ENCODE measurements at regions of chr1 and their contacts with region 1.

Region 1: DNA sequence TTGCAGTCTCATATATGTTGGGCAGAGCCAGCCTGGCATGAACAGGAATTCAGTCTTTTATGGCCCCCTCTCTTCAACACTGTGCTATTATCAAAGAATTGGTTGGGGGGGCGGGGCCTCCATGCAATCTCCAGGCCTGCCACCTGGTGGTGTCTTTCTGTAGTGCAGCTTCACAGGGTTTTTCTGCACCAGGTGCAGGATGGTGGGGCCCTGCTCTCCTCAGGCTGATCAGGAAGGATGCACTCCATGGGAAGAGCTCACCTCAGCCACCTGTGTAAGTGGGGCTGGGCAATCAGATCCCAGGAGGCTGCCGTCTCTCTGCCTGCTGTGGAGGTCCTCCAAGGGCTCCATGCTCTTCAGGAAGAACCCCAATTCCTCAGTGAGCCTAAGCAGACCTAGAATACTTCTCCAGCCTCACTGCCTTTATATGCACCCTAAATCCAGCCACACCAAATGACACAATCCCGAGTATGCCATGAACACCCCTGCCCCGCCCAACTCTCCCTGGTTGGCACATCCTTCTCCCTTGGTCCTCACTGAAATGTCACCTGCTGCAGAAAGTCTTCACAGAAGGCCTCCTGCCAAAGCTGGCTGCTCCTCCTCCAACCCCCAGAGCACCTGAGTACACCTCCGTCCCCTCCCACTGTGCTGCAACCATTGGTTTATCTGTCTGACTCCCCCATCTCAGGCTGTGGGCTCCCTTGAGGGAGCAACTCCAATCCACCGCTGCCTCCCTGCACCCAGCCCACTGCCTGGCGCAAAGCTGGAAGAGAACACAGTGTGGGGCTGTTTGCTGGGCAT is 16.5 kb downstream of the STK40 start:
- DNase-seq: peak; percentile 46 to 98
- H3K4me3 ChIP-seq: no peak overlapping the region
- H3K27ac ChIP-seq: no peak overlapping the region
- H3K4me1 ChIP-seq: peaks cover 12 to 33% (median 20%) of the 10 kb centered on the region in 4 experiments
- H3K27me3 ChIP-seq: no peaks in the 10 kb centered on the region
- CTCF ChIP-seq: peak; percentile 85 to 94 (median 87)
- EP300 ChIP-seq: no peak
- POLR2A ChIP-seq: no peak
- RAD21 ChIP-seq: peak; percentile 55 to 63

Region 2: DNA sequence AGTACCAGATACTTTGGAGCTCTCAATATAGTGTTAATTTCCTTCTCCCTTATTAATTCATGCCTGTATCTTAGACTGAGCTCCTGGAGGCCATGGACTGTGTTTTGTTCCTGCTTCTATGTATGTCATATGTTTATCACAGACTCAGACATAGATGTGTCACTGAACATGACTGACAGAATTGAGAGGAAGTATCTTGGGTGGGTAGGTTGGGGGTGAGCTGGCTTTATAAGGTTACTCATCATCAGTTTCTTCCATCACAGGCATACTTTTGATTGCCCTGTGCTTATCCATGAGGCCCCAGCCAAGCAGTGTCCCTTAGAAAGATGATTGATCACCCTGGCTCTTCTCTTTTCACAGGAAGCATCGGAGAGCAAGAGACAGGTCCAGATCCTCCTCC is 68.7 kb before region 1 on chr1:
- CTCF ChIA-PET with region 1: interaction called, 30 read pairs
- POLR2A ChIA-PET with region 1: no interaction called
- DNase-seq: no peak
- H3K4me3 ChIP-seq: no peak overlapping the region
- H3K27ac ChIP-seq: no peak overlapping the region
- H3K4me1 ChIP-seq: no peaks in the 10 kb centered on the region; a peak in 1 of 7 replicates
- H3K27me3 ChIP-seq: no peaks in the 10 kb centered on the region
- CTCF ChIP-seq: no peak
- EP300 ChIP-seq: no peak
- POLR2A ChIP-seq: no peak
- RAD21 ChIP-seq: no peak

Region 3: DNA sequence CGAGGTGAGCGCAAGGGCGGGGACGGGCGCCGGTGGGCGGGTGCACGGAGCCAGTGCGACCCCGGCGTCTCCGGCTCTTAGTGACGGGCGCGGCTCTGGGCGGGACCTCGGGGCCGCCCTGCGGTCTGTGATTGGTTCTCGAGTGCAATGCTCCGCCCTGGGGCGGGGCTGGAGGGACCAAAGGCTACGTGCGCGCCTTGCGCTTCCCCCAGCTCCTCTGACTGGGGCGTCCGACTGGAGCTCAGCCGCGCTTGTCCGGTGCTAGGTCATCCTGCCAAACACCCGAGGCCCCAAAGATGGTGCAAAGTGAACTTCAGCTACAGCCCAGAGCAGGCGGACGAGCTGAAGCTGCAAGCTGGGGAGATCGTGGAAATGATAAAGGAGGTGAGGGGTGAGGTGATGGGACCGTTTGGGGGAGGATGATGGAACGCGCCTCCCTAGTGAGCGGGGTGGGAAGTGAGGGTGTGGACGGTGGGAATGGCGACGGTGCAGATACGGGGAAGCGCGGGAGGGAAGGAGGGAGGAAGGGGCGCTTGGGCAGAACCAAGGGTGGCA is 62.3 kb before region 1 on chr1:
- CTCF ChIA-PET with region 1: interaction called, 30 read pairs
- POLR2A ChIA-PET with region 1: interaction called, 4 read pairs
- DNase-seq: peak; percentile 88 to 97
- H3K4me3 ChIP-seq: peak overlapping the region; percentile 62 to 87 (median 72)
- H3K27ac ChIP-seq: no peak overlapping the region
- H3K4me1 ChIP-seq: peaks cover 0 to 9% (median 6%) of the 10 kb centered on the region in 4 experiments; a peak in 6 of 7 replicates
- H3K27me3 ChIP-seq: no peaks in the 10 kb centered on the region
- CTCF ChIP-seq: no peak
- EP300 ChIP-seq: no peak
- POLR2A ChIP-seq: peak; percentile 88 to 93
- RAD21 ChIP-seq: no peak

Region 4: DNA sequence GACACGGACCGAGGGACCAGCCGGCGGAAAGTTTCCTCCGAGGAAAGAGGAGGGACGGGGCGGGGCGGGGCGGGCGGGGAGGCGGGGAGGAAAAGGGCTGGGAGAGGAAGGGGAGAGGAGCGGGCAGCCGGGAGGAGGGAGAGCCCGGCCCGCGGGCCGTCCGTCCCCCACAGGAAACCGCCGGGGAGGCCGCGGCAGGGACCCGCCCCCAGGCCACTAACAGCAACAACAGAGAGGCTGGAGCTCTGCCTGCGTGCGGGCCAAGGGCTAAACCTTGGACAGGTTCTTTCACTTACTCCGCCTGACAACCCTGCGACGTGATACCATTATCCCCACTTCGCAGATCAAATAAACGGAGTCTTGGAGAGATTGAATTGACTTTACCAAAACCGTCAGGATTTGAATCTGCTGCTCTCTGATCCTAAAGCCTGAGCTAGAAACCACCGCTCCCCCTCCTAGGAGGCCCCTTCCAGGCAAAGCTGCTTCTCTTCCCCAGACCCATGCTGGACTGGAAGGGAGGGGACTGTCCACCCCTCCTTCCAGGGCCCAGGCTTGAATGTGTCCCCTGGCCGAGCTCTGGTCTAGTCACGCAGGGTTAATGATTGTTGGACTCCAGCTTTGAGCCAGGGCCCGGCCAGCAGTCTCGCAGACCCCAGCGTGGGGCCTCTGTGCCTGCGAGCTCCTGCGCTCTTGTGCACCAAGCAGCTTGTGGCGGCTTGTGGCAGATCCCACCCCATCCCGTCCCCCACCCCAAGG is 45.5 kb before region 1 on chr1 and contains the start of gene EVA1B:
- CTCF ChIA-PET with region 1: interaction called, 15 read pairs
- POLR2A ChIA-PET with region 1: interaction called, 5 read pairs
- DNase-seq: peak in 1 of 2 experiments; percentile 79
- H3K4me3 ChIP-seq: peak within 1 kb of the TSS; percentile 27 to 67 (median 49)
- H3K27ac ChIP-seq: no peak within 1 kb of the TSS
- H3K4me1 ChIP-seq: peaks cover 0 to 28% (median 16%) of the 10 kb centered on the region in 4 experiments; a peak in 6 of 7 replicates
- H3K27me3 ChIP-seq: peaks cover 0 to 39% (median 20%) of the 10 kb centered on the region in 4 experiments; a peak in 5 of 7 replicates
- CTCF ChIP-seq: no peak
- EP300 ChIP-seq: no peak
- POLR2A ChIP-seq: no peak; a peak in 1 of 3 replicates
- RAD21 ChIP-seq: no peak
- total RNA-seq, gene EVA1B: 10.0 and 10.3 TPM in 2 replicates

Region 5: DNA sequence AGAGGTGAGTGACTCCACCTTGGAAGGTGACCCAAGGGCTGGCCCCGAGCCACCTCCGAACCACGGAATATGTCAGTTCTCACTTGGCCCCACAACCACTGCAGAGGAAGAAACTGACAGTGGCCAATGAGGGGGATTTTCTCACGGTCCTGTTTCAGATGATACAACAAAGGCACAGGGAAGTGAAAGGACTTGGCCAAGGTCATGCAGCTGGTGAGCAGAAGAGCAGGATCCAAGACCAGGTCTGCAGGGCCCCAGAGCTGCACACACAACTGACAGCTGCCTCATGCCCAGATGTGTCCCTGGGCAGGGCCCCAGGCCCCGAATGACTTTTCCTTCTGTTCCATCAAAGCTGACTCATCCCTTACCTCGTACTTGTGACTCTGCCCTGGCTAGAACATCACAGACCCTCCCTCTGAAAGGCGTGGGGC is 20.0 kb before region 1 on chr1:
- CTCF ChIA-PET with region 1: no interaction called
- POLR2A ChIA-PET with region 1: no interaction called
- DNase-seq: no peak
- H3K4me3 ChIP-seq: no peak overlapping the region
- H3K27ac ChIP-seq: no peak overlapping the region
- H3K4me1 ChIP-seq: peaks cover 0 to 6% (median 0%) of the 10 kb centered on the region in 4 experiments; a peak in 1 of 7 replicates
- H3K27me3 ChIP-seq: no peaks in the 10 kb centered on the region
- CTCF ChIP-seq: no peak
- EP300 ChIP-seq: no peak
- POLR2A ChIP-seq: no peak
- RAD21 ChIP-seq: no peak

Region 6: DNA sequence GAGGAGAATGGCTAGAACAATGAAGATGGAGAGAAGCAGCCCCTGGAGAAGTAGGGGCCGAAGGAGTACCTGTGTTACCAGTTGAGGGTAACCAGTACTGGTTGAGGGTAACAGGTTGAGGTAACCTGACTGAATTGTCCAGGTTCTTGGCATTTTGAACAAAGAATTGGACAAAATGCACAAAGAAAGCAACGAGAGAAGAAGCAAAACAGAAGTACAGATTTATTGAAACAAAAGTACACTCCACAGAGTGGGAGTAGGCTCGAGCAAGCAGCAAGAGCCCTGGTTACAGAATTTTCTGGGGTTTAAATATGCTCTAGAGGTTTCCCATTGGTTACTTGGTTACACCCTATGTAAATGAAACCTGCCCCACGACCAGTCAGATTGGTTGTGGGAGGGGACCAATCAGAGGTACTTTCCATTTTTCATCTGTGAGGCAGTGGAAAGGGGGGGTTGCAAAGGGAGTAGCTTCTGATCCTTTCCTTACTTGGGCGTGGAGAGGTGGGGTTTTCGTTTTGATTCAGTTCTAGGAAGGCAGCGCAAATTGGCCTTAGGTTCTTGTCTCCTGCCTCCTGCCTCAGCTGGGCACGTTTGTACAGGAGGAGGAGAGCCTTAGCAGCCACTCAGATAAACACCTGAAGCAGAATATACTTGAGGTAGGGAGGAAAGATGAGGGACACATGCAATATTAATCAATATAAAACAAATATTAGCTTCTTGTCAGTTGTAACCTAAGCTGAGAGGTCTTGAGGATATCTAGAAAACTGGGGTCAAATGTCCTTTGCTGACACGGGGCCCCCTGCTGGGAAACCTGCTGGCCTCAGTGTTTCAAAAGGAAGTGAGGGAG is 42.6 kb after region 1 on chr1:
- CTCF ChIA-PET with region 1: interaction called, 24 read pairs
- POLR2A ChIA-PET with region 1: interaction called, 3 read pairs
- DNase-seq: no peak
- H3K4me3 ChIP-seq: no peak overlapping the region
- H3K27ac ChIP-seq: no peak overlapping the region
- H3K4me1 ChIP-seq: peaks cover 0 to 3% (median 0%) of the 10 kb centered on the region in 4 experiments; a peak in 1 of 7 replicates
- H3K27me3 ChIP-seq: no peaks in the 10 kb centered on the region
- CTCF ChIP-seq: no peak
- EP300 ChIP-seq: no peak
- POLR2A ChIP-seq: 0 out of 3 replicates have a peak, but pooled peaks of 1 of the 2 experiments have one; percentile 17
- RAD21 ChIP-seq: no peak

Region 7: GRCh38 chr1:36420836-36421664 is 51.8 kb after region 1 on chr1:
- CTCF ChIA-PET with region 1: interaction called, 21 read pairs
- POLR2A ChIA-PET with region 1: no interaction called
- DNase-seq: peak; percentile 79 to 100
- H3K4me3 ChIP-seq: no peak overlapping the region
- H3K27ac ChIP-seq: no peak overlapping the region
- H3K4me1 ChIP-seq: no peaks in the 10 kb centered on the region
- H3K27me3 ChIP-seq: no peaks in the 10 kb centered on the region
- CTCF ChIP-seq: peak; percentile 91 to 99 (median 99)
- EP300 ChIP-seq: no peak
- POLR2A ChIP-seq: no peak
- RAD21 ChIP-seq: peak; percentile 94 to 96